A549 (cell line): ENCODE measurements at regions of chr17 and their contacts with region 1.

Region 1: DNA sequence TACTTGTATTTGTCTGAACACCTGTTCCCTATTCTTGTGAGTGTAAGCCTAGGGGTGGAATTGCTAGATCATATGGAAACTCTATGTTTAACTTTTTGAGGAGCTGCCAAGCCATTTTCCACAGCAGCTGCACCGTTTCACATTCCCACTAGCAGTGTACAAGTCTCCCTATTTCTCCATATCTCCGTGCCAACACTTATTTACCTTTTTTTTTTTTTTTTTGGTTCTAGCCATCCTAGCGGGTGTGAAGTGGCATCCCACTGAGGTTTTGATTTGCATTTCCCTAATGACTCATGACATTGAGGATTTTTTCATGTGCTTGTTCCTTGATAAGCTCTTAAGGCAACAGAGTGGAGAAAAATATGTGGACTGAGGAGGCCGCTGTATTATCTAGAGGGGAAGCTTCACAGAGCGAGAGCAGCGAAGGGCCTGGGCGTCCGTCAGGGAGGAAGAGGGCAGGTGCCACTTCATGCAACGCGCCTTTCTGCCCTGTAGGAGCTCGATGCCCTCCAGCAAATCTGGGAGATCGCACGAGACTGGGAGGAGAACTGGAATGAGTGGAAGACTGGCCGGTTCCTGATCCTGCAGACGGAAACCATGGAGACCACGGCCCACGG is 50.0 kb downstream of the DNAH2 start:
- DNase-seq: no peak
- ATAC-seq: peak; percentile 27 to 48; a peak in 4 of 6 replicates
- H3K4me3 ChIP-seq: no peak overlapping the region
- H3K27ac ChIP-seq: no peak overlapping the region
- H3K4me1 ChIP-seq: no peaks in the 10 kb centered on the region
- CTCF ChIP-seq: no peak
- EP300 ChIP-seq: no peak
- POLR2A ChIP-seq: no peak
- RAD21 ChIP-seq: no peak

Region 2: DNA sequence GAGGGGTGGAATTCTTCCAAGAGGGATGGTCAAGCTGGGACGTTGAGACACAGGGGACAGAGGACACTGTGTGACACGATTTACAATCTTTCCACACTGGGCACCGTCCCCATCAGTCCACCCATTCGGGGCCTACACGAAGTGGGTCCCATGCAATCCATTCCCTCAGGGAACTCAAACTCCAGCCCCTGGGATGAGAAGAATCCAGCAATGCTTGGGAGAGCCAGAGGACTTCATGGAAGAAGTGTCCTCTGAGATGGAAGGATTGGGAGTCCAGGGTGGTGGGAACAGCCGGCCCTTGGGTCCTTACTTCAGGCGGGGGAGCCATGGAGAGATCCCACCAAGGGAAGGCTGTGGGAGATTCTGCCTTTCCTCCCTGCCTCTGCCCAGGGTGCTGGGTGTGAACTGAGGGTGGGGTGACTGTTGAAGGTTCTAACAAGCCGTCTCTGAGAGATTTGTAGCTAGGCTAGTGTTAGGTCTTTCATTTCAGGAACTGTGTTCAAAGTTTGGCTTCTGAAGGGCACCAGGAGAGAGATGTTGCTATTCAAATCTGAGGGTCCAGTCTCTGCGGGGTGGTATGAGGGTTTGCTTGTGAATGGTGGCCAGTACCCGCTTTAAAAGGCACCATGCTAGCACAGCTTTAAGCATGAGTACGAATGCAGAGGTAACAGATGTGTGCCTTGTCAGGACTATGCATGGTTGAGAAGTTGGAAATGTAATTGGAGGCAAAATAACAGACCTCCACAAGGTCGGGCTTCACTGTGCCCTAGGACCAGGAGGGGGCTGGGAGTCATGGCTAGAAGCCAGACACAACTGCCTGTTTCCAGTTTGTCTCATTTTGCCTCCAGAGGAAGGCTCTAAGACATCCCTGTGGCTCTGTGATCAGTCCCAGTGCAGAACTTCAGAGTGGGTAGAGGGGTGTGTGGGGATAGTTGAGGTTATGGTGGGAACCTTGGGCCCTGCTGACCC is 114.8 kb before region 1 on chr17:
- CTCF ChIA-PET with region 1: no interaction called
- POLR2A ChIA-PET with region 1: no interaction called
- DNase-seq: no peak
- ATAC-seq: 0 out of 6 replicates have a peak, but pooled peaks of 1 of the 2 experiments have one; percentile 3
- H3K4me3 ChIP-seq: no peak overlapping the region
- H3K27ac ChIP-seq: no peak overlapping the region
- H3K4me1 ChIP-seq: peaks cover 16% of the 10 kb centered on the region; the same call in 1 of the 3 replicates
- CTCF ChIP-seq: no peak
- EP300 ChIP-seq: no peak
- POLR2A ChIP-seq: no peak
- RAD21 ChIP-seq: no peak

Region 3: DNA sequence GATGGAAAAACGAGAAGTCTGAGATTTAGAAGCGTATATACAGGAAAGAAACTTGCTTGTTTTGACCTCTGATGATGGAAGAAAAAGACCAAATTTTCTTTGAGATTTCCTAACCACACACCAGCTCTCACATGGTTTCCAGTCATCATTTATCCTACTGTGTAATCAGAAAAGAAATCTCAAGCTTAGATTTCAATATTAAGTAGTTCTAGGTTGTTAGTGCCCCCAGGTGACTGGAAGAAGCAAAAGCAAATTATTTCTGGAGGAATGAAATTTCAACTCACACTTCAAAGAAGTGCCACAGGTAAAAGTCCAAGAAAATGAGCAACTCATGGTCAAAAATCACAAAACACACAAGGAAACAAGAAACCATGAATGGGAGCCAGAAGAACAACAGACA is 14.7 kb after region 1 on chr17:
- CTCF ChIA-PET with region 1: interaction called, 14 read pairs
- POLR2A ChIA-PET with region 1: no interaction called
- DNase-seq: peak in 1 of 2 experiments; percentile 20
- ATAC-seq: no peak
- H3K4me3 ChIP-seq: no peak overlapping the region
- H3K27ac ChIP-seq: no peak overlapping the region
- H3K4me1 ChIP-seq: no peaks in the 10 kb centered on the region
- CTCF ChIP-seq: peak; percentile 17; the same call in 1 of the 3 replicates
- EP300 ChIP-seq: no peak
- POLR2A ChIP-seq: no peak
- RAD21 ChIP-seq: peak; percentile 20 to 45; a peak in 2 of 5 replicates